ENCODE measurements at regions of chr3 and their contacts with region 1.

Region 1: GRCh38 chr3:196611761-196612483 is 27.6 kb upstream of the NRROS start:
- DNase-seq: no peak
- CTCF ChIP-seq: no peak

Region 2: GRCh38 chr3:196684548-196685407 is 72.9 kb after region 1 on chr3:
- in situ Hi-C with region 1: loop called (anchors 10 kb)
- DNase-seq: peak; percentile 84
- CTCF ChIP-seq: peak; percentile 68

Measured in GM13977 (cell line).